AG04450 (cell line): ENCODE measurements at regions of chr5 and their contacts with region 1.

Region 1: GRCh38 chr5:159021901-159022556 is 77.7 kb downstream of the EBF1 start:
- DNase-seq: peak; percentile 55
- H3K4me3 ChIP-seq: no peak overlapping the region
- H3K27ac ChIP-seq: peak overlapping the region; percentile 40
- H3K27me3 ChIP-seq: no peaks in the 10 kb centered on the region
- CTCF ChIP-seq: no peak

Region 2: DNA sequence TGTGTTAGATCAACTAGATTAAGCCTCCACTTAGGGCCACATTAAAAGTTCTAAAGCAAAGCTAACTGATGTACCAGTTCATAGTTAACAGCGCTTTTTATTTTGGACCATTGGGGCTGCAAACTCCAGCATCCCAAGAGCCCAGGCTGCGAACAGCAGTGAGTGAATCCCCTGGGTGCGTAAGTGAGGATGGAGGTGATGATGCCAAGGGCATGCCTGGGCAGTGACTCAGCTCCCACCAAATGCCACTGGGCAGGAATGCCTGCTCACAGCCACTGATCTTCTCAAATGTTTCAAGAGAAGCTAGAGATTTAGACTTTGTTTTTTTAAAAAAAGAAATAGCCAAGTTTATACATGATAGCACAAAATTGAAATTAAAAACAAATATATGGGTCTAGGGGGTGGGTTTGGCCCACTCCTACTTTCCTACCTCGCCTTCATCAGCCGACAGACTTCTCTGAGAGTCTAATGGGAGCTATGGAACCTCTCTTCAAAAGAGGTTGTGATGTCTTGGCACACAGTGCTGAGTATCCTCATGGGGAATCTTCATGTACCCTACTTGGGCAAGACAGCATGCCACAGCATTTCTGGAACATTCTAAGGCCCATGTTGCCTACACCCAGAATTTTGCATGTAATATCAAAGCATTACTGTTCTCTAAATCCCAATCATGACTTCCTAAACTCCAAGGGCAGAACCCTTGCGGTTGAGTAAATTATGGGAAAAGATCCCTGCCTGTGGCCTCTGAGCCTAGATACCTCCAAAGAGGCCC is 320.4 kb before region 1 on chr5:
- CTCF ChIA-PET with region 1: interaction called, 5 read pairs
- POLR2A ChIA-PET with region 1: interaction called, 12 read pairs
- DNase-seq: no peak
- H3K4me3 ChIP-seq: no peak overlapping the region
- H3K27ac ChIP-seq: no peak overlapping the region
- H3K27me3 ChIP-seq: no peaks in the 10 kb centered on the region
- CTCF ChIP-seq: no peak

Region 3: DNA sequence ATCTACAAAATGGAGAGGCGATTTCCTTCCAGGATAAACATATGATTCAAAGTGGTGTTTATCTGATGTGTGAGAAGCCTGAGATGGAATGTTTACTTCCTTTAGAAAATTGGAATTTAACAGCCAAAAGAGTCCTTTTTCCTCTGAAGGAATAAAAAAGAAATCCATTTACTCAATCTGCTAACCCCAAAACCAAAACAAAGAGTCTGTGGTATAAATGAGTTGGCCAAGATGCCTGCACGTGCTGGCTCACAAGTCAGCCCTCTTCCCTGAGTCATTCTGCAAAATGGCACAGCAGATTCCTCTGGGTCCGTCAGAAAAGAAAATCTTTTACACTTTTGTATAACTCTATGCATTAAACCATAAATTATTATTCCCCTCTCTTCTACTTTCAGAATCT is 16.9 kb after region 1 on chr5:
- CTCF ChIA-PET with region 1: no interaction called
- POLR2A ChIA-PET with region 1: no interaction called
- DNase-seq: peak; percentile 73
- H3K4me3 ChIP-seq: no peak overlapping the region
- H3K27ac ChIP-seq: peak overlapping the region; percentile 59
- H3K27me3 ChIP-seq: no peaks in the 10 kb centered on the region
- CTCF ChIP-seq: no peak